Esophagus squamous epithelium (tissue), 5 donors: ENCODE measurements at regions of chr2 and their contacts with region 1.

Region 1: DNA sequence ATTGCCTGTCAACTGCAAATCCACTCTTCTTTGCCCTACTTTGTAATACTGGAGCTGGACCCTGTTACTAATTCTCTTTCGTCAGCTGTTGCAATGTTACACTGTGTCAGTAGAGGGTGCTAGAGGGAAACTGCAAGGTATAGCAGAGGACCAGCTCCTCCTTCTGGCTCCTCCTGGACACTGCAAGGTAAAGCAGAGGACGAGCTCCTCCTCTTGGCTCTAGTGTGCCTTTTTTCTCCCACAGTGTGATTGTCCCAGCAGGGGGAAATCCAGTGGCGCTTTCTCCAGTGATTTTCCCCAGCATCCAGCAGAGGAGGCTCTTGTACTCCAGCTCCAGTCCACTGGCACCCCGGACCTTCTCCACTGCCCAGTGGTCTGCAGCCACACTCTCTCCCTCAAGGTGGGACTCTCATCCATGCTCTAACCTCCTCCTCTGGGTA is 95.6 kb downstream of the CAPN13 start:
- DNase-seq: no peak
- H3K4me3 ChIP-seq: no peak overlapping the region
- H3K27ac ChIP-seq: no peak overlapping the region
- H3K4me1 ChIP-seq: peaks cover 0 to 20% (median 8%) of the 10 kb centered on the region in 3 donors
- H3K27me3 ChIP-seq: no peaks in the 10 kb centered on the region
- CTCF ChIP-seq: peak; percentile 91 to 100 (median 98)
- POLR2A ChIP-seq: no peak

Region 2: GRCh38 chr2:30208452-30208851 is 503.2 kb before region 1 on chr2:
- intact Hi-C with region 1: loop called (anchors 5 kb)
- DNase-seq: no peak
- H3K4me3 ChIP-seq: no peak overlapping the region
- H3K27ac ChIP-seq: no peak overlapping the region
- H3K4me1 ChIP-seq: peaks cover 0 to 4% (median 4%) of the 10 kb centered on the region in 3 donors
- H3K27me3 ChIP-seq: peaks cover 0 to 8% (median 0%) of the 10 kb centered on the region in 4 donors
- CTCF ChIP-seq: peak; percentile 86 to 93 (median 90)
- POLR2A ChIP-seq: no peak

Region 3: DNA sequence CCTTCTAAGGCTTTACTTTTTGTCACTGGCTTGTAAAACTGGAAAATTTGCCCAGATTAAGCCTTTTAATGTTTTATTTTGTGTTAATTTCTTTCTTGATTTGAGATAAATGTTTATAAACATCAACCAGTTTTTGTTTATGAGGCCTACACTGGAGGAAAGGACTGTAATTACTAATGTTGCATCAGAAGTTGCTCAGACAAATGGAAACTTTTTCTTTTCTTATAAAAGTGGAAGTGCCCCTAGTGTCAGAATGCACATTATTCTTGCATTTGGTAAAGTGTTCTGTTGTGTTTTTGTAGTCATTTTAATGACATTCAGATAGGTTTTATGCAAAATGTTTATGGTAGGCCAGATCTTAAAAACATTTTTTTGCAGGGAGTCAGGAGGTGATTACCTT is 239.3 kb before region 1 on chr2:
- intact Hi-C with region 1: no loop called
- DNase-seq: no peak
- H3K4me3 ChIP-seq: no peak overlapping the region
- H3K27ac ChIP-seq: peak overlapping the region in 2 of 4 donors; percentile 25 to 30
- H3K4me1 ChIP-seq: peaks cover 0 to 4% (median 3%) of the 10 kb centered on the region in 3 donors
- H3K27me3 ChIP-seq: no peaks in the 10 kb centered on the region
- CTCF ChIP-seq: no peak
- POLR2A ChIP-seq: no peak

Region 4: GRCh38 chr2:30590407-30590806 is 121.3 kb before region 1 on chr2:
- intact Hi-C with region 1: no loop called
- DNase-seq: no peak
- H3K4me3 ChIP-seq: no peak overlapping the region
- H3K27ac ChIP-seq: no peak overlapping the region
- H3K4me1 ChIP-seq: no peaks in the 10 kb centered on the region
- H3K27me3 ChIP-seq: no peaks in the 10 kb centered on the region
- CTCF ChIP-seq: no peak
- POLR2A ChIP-seq: no peak

Region 5: GRCh38 chr2:30862054-30862651 is 150.5 kb after region 1 on chr2:
- intact Hi-C with region 1: loop called (anchors 10 kb)
- DNase-seq: no peak
- H3K4me3 ChIP-seq: no peak overlapping the region
- H3K27ac ChIP-seq: no peak overlapping the region
- H3K4me1 ChIP-seq: peaks cover 0 to 19% (median 7%) of the 10 kb centered on the region in 3 donors
- H3K27me3 ChIP-seq: no peaks in the 10 kb centered on the region
- CTCF ChIP-seq: peak; percentile 25 to 50 (median 46)
- POLR2A ChIP-seq: no peak

Region 6: GRCh38 chr2:31170071-31170698 is 458.5 kb after region 1 on chr2:
- intact Hi-C with region 1: loop called (anchors 5 kb)
- DNase-seq: no peak
- H3K4me3 ChIP-seq: no peak overlapping the region
- H3K27ac ChIP-seq: no peak overlapping the region
- H3K4me1 ChIP-seq: no peaks in the 10 kb centered on the region
- H3K27me3 ChIP-seq: peaks cover 0 to 6% (median 0%) of the 10 kb centered on the region in 4 donors
- CTCF ChIP-seq: peak in 5 of 6 experiments; percentile 84 to 90 (median 87)
- POLR2A ChIP-seq: no peak

Region 7: DNA sequence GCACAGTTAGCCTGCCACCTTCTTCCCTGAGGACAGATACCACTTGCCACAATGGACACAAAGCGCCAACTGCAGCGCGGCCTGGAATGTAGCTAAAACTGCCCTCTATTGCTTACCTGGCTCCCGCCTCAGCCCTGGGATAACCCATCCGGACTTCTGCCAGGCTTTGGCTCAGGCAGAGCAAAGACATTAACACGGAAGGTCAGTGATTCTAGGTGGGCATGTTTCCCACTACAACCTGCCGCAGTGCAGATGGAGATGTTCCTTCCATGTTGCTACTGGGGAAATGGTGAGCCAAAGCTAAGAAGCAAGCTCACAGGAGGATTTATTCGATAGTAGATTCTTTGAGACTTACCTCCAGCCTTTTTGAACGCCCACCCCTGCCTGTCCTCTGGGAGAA is 628.0 kb after region 1 on chr2:
- intact Hi-C with region 1: loop called (anchors 5 kb)
- DNase-seq: no peak
- H3K4me3 ChIP-seq: no peak overlapping the region
- H3K27ac ChIP-seq: no peak overlapping the region
- H3K4me1 ChIP-seq: no peaks in the 10 kb centered on the region
- H3K27me3 ChIP-seq: no peaks in the 10 kb centered on the region
- CTCF ChIP-seq: no peak
- POLR2A ChIP-seq: no peak